ENCODE measurements at regions of chr18 and their contacts with region 1.

Region 1: DNA sequence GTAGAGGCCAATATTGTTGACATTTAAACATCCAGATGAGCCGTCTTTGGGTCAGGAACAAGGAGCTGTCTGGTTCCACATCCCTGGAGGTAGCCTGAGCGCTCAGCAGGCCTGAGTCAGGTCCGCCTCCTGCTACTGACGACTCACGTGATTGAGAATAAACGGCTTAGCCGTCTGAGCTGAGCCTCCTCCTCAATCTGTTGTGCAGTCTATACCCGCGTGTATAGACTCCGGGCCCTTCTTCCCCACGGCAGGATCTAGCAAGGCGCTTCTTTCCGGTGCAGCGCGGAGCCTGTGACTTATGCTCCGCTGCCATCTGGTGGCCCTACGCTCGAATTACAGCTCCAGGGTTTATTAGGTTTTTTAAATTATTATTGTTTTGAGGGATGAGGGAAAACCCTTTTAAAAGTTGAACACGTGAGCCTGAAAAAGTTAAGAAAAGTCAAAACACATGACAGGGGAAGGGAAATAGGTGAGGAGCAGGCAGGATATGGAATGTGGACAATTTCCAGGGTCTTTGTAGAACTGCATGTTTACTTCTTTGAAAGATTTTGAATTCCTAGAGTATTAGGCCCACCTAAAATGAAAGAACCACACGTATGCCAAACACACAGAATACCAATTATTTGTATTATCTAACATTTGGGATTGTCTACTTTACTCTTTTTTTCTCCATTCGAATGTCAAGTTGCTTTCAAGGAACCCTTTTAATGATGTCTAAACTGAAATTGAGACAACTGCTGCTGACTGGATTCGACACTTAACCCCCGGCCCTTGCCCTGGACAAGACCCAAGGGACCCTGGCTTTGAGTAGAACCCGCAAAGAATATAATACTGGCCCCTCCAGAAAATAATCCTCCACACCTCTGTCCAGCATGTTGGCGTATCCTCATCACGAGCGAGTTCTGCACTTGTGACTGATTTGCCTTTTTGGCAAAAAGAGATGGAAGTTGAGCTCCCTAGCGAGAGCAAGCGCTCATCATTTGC is 112.4 kb upstream of the ZNF236 start:
- DNase-seq: peak; percentile 68
- ATAC-seq: peak; percentile 92
- H3K4me3 Mint-ChIP-seq: 0 out of 2 replicates have a peak overlapping the region, but pooled peaks have one; percentile 19
- H3K27ac Mint-ChIP-seq: no peak overlapping the region
- H3K4me1 Mint-ChIP-seq: peaks cover 11% of the 10 kb centered on the region; the same call in 1 of the 2 replicates
- H3K27me3 Mint-ChIP-seq: no peaks in the 10 kb centered on the region; the same call in 1 of the 2 replicates
- CTCF ChIP-seq: peak; percentile 80

Region 2: DNA sequence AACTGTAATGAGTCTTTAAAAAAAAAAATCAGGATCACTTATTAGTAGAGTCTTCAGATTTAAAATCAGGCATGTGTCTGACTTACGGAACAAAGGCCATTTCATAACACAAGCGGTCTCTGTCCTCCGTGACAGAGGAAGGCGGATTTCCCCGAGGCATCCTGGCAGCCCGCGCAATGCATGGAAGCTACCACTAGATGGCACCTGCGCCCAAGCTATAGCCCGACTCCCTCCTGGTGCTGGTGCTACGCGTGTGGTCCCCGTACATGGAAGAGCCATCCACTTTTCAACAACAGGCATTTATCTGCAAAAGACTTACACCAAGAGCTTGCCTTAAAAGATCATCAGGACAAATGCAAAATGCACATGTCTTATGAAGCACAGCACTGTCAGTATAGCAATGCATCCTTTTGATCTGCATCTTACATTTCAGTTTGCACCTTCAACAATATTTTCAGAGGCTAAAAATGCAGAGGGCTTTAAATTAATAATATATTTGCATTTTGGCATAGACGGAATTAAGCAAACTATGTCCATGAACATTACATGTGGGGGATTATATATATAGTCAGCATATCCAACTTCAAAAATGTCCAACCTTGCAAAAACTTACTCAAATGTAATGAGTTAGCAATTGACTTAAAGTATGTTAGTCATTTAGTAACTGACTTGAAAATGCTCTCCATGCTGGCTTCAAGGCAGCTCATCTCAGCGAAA is 310.9 kb before region 1 on chr18:
- CTCF ChIA-PET with region 1: interaction called, 31 read pairs
- POLR2A ChIA-PET with region 1: no interaction called
- DNase-seq: peak; percentile 84
- ATAC-seq: peak; percentile 85
- H3K4me3 Mint-ChIP-seq: no peak overlapping the region
- H3K27ac Mint-ChIP-seq: 0 out of 2 replicates have a peak overlapping the region, but pooled peaks have one; percentile 23
- H3K4me1 Mint-ChIP-seq: peaks cover 27% of the 10 kb centered on the region
- H3K27me3 Mint-ChIP-seq: no peaks in the 10 kb centered on the region
- CTCF ChIP-seq: peak; percentile 84

Region 3: DNA sequence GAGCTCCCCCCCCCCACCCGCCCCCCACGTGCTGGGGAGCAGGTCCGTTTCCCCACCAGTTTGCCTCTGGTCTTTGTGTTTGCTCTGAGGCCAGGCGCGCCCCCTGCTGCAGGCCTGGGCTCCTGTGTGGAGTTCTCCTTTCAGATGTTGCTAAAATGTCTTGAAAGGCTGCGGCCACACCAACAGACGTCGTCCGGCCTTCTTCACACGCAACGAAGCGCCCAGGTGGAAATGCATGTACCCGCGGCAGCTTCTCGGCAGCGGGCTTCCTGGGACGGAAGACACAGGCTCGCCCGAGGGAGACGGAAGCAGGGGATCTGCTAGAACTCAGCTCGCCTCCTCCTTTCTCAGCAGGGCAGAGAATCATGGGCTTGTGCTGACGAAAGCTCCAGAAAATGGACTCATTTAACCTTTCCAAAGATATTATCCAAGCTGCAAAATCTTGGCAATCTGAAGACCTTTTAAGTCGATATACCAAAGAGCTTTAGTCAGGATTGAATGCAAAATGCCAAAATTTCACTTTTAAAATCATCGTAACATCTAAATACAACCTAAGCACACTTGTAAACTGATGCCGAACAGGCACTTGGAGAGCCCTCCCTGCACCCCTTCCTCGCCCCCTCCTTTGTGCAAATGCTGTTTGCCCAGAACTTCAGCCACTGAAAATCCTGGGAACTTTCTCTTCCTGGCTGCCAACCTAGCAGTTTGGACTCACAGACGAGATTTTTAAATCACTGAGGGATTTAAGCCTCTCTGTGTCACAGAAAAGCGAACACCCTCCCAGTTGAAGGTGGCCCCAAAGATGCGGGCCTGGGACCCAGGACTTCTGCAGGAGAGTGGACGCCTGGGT is 89.4 kb before region 1 on chr18:
- CTCF ChIA-PET with region 1: interaction called, 13 read pairs
- POLR2A ChIA-PET with region 1: no interaction called
- DNase-seq: peak; percentile 81
- ATAC-seq: peak; percentile 75
- H3K4me3 Mint-ChIP-seq: peak overlapping the region; percentile 77
- H3K27ac Mint-ChIP-seq: peak overlapping the region; percentile 89
- H3K4me1 Mint-ChIP-seq: peaks cover 60% of the 10 kb centered on the region
- H3K27me3 Mint-ChIP-seq: peaks cover 39% of the 10 kb centered on the region
- CTCF ChIP-seq: 0 out of 2 replicates have a peak, but pooled peaks have one; percentile 19

Region 4: GRCh38 chr18:76679259-76679658 is 30.7 kb before region 1 on chr18:
- CTCF ChIA-PET with region 1: interaction called, 11 read pairs
- POLR2A ChIA-PET with region 1: no interaction called
- DNase-seq: peak; percentile 42
- ATAC-seq: peak; percentile 72
- H3K4me3 Mint-ChIP-seq: no peak overlapping the region
- H3K27ac Mint-ChIP-seq: no peak overlapping the region
- H3K4me1 Mint-ChIP-seq: peaks cover 15% of the 10 kb centered on the region
- H3K27me3 Mint-ChIP-seq: no peaks in the 10 kb centered on the region
- CTCF ChIP-seq: no peak

Region 5: DNA sequence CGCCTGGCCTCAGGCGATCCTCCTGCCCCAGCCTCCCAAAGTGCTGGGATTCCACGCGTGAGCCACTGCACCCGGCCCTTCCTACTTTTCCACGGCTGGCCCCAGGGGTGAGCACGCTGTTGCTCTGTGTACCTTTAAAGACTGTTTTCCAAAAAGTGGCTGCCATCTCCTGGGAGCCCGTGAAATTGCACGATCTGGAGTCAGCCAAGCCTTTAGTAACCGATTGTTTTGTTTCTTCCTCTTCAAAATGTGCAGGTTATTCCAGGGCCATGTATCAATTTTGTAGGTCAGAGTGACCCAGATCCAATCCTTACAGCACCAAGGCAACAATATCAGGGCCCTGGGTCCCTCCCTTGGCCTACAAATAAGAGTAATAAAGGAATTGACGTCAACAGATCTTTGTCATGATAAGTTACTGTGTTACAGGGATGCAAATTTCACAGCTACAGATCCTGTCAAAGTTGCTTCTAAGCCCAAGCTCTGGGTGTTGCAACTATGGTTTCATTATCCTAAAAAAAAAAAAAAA is 23.2 kb before region 1 on chr18:
- CTCF ChIA-PET with region 1: interaction called, 18 read pairs
- POLR2A ChIA-PET with region 1: no interaction called
- DNase-seq: peak; percentile 63
- ATAC-seq: peak; percentile 88
- H3K4me3 Mint-ChIP-seq: peak overlapping the region; percentile 26; the same call in 1 of the 2 replicates
- H3K27ac Mint-ChIP-seq: peak overlapping the region; percentile 93
- H3K4me1 Mint-ChIP-seq: peaks cover 19% of the 10 kb centered on the region
- H3K27me3 Mint-ChIP-seq: no peaks in the 10 kb centered on the region
- CTCF ChIP-seq: no peak

Region 6: DNA sequence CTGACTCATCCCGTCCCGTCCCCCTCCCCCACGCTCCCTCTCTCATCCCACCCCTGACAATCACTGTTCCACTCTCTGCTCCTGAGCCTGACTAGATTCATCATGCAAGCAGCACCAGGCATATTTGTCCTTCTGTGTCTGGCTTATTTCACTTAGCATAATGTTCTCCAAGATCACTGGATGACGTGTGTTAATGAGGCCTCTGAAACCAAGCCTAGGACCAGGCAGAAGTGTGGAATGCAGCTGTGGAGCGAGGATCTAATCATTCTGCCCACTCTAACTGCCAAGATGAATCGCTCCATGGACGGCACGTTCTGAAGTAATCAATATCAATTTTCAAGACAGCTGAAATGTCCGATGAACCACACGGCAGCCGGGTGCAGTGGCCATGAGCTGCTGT is 10.0 kb before region 1 on chr18:
- CTCF ChIA-PET with region 1: interaction called, 15 read pairs
- POLR2A ChIA-PET with region 1: no interaction called
- DNase-seq: no peak
- ATAC-seq: no peak
- H3K4me3 Mint-ChIP-seq: no peak overlapping the region
- H3K27ac Mint-ChIP-seq: no peak overlapping the region
- H3K4me1 Mint-ChIP-seq: peaks cover 14% of the 10 kb centered on the region
- H3K27me3 Mint-ChIP-seq: no peaks in the 10 kb centered on the region
- CTCF ChIP-seq: no peak

Region 7: GRCh38 chr18:76741365-76741764 is 31.4 kb after region 1 on chr18:
- CTCF ChIA-PET with region 1: no interaction called
- POLR2A ChIA-PET with region 1: no interaction called
- DNase-seq: no peak
- ATAC-seq: no peak
- H3K4me3 Mint-ChIP-seq: no peak overlapping the region
- H3K27ac Mint-ChIP-seq: no peak overlapping the region
- H3K4me1 Mint-ChIP-seq: no peaks in the 10 kb centered on the region
- H3K27me3 Mint-ChIP-seq: no peaks in the 10 kb centered on the region; the same call in 1 of the 2 replicates
- CTCF ChIP-seq: no peak